Activated CD8-positive, alpha-beta memory T cell treated with anti-CD3 and anti-CD28 coated beads, Interleukin-2, amount 10 ng/mL, durations not matched to agents 7 days and 5 days (primary cell): ENCODE measurements at regions of chr12 and their contacts with region 1.

Region 1: DNA sequence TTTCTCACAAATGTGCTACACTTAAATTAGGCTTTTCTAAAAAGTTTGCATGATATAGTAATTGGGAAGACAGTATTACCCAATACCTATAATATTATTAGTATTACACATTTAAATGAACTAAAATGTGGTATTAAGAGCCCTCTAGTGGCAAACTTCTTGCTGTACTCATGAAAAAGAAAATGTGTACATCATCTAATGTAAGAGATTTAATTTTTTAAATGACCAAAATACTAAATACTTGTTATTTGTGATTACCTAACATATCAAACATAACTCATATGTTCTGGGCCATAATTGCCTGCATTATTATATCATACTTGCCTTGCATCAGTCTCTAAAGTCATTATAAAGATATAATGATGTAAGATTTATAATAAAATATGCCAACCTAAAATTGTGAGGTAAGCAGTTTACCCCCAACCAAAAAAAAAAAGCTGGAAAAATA is 64.2 kb downstream of the DNAI7 start:
- DNase-seq: no peak
- ATAC-seq: no peak
- H3K4me3 Mint-ChIP-seq: no peak overlapping the region
- H3K27ac Mint-ChIP-seq: no peak overlapping the region
- H3K4me1 Mint-ChIP-seq: no peaks in the 10 kb centered on the region
- H3K27me3 Mint-ChIP-seq: peaks cover 8% of the 10 kb centered on the region

Region 2: GRCh38 chr12:24838531-24838950 is 292.2 kb before region 1 on chr12:
- CTCF ChIA-PET with region 1: no interaction called
- DNase-seq: peak; percentile 71
- ATAC-seq: peak; percentile 13
- H3K4me3 Mint-ChIP-seq: peak overlapping the region; percentile 65
- H3K27ac Mint-ChIP-seq: peak overlapping the region; percentile 91
- H3K4me1 Mint-ChIP-seq: peaks cover 41% of the 10 kb centered on the region
- H3K27me3 Mint-ChIP-seq: no peaks in the 10 kb centered on the region

Region 3: DNA sequence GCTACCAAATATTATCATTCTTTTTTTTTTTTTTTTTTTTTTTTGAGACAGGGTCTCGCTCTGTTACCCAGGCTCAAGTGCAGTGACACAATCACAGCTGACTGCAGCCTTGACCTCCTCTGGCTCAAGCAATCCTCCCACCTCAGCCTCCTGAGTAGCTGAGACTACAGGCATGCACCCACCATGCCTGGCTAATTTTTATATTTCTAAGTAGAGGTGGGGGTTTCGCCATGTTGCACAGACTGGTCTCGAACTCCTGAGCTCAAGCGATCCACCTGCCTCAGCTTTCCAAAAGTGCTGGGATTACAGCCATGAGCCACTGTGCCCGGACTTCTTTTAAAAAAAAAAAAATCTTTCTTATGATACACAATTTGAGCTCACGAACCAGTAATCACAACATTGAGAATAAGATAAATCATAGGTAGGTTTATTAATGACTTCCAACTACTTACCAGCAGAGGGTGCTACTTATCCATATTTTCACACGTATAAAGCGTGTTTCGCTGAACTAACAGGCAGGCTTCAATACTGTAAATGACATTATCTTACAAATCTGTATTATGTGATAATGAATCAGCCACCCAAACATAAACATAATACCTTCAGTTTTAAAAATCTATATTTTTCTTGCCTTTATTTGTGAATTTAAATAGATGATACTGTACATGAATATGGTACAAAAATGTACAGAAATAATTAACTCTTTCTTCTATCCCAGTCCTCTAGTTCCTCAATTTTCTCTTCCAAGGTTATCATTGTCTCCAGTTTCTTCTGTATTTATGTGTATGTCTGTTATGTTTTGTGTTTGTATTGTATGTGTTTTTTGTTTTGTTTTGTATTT is 139.3 kb before region 1 on chr12:
- CTCF ChIA-PET with region 1: interaction called, 16 read pairs
- DNase-seq: no peak
- ATAC-seq: peak; percentile 91
- H3K4me3 Mint-ChIP-seq: no peak overlapping the region
- H3K27ac Mint-ChIP-seq: no peak overlapping the region
- H3K4me1 Mint-ChIP-seq: no peaks in the 10 kb centered on the region
- H3K27me3 Mint-ChIP-seq: peaks cover 9% of the 10 kb centered on the region

Region 4: DNA sequence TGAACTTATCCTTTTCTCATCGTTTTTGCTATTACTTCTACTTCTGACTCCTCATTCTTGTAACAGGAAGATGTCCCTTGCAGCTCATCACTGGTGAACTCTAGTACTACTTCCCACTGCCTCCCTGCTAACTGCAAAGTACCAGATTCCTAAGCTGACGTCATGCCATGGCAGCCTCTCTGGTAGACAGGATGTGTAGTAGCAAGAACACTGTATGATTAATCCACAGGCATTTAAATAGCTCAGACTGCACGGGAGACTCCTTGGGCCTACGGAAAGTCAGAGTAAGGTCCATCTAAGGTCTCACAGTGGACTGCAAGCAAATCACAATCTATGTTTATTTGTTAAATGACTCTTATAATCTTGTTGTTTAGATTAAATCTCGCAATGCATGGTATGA is 20.7 kb after region 1 on chr12:
- CTCF ChIA-PET with region 1: interaction called, 14 read pairs
- DNase-seq: no peak
- ATAC-seq: no peak
- H3K4me3 Mint-ChIP-seq: no peak overlapping the region
- H3K27ac Mint-ChIP-seq: no peak overlapping the region
- H3K4me1 Mint-ChIP-seq: peaks cover 9% of the 10 kb centered on the region
- H3K27me3 Mint-ChIP-seq: no peaks in the 10 kb centered on the region